ENCODE measurements at regions of chr6 and their contacts with region 1.

Region 1: GRCh38 chr6:16947375-16948015 is 154.4 kb upstream of the STMND1 start:
- DNase-seq: peak; percentile 98
- ATAC-seq: peak; percentile 95
- H3K4me3 ChIP-seq: no peak overlapping the region
- H3K27ac ChIP-seq: peak overlapping the region; percentile 91
- H3K4me1 ChIP-seq: peaks cover 21% of the 10 kb centered on the region
- H3K27me3 ChIP-seq: no peaks in the 10 kb centered on the region
- CTCF ChIP-seq: no peak
- POLR2A ChIP-seq: no peak
- RAD21 ChIP-seq: no peak

Region 2: DNA sequence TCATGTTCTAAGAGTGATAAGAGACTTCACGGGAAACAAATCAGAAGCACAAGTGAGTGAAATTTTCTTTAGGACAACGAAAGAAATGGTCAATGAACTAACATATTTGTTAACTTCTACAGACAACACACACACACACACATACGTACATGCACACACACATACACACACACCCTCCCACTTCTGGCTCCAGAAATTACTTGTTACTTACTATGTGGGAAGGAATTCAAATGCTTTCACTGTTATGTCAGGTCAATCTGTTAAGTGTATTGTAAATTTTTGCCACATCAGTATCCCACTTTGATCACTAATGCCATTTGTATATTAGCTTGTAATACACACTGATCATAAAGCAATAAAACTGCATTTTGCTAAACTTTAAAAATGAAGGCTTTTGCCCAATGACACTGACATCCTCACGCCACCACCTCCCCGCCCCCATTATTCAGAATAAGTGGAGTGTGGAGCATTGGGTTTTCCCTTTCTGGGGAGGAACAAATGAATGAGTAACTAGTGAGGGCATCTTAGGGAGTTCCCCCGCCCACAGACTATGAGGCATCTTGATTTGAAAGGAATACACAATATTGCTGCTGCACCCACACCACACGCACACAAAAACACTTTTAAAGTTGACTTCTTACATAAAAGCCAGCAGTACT is 262.5 kb before region 1 on chr6:
- CTCF ChIA-PET with region 1: no interaction called
- POLR2A ChIA-PET with region 1: no interaction called
- dilution Hi-C with region 1: no loop called
- in situ Hi-C with region 1: no loop called
- intact Hi-C with region 1: no loop called
- DNase-seq: peak; percentile 82
- ATAC-seq: no peak
- H3K4me3 ChIP-seq: no peak overlapping the region
- H3K27ac ChIP-seq: no peak overlapping the region
- H3K4me1 ChIP-seq: peaks cover 23% of the 10 kb centered on the region
- H3K27me3 ChIP-seq: no peaks in the 10 kb centered on the region
- CTCF ChIP-seq: no peak
- POLR2A ChIP-seq: no peak
- RAD21 ChIP-seq: no peak

Region 3: DNA sequence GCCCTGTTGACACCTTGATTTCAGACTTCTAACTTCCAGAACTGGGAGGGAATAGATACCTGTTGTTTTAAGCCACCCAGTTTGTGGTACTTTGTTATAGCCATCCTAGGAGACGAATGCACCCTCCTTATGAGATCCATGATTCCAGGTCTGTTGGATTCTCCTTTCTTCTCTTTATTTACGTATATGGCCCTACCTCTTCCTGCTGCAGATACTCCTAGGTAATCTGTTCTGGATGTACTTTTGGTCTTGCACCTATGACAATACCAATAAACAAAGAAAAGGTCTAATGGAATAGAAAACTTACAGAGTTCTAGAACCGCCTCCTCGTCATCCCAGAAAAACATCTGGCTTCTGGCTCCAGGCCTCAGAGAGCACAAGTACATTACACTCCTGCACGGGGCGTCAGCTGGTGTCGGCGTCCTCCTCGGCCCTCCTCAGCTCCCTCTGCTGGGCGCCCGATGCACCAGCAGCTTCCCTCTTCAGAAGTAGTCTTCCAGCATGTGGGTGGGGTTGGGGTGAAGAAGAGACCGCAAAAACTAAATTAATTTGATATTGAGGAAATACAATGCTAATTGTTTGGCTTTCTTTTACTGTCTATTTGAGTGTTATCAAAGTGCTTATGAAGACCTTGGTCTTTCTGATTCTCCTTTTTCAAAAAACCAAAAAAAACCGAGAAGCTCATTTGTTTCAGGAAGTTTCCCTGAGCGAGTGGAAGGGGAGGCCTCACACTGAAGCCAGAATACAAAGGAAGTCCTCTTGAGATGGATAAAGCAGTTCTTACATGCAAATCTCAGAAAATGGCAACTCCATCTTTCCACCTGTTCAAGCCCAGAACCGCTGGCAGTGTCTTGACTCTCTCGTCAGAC is 176.6 kb before region 1 on chr6:
- CTCF ChIA-PET with region 1: interaction called, 3 read pairs
- POLR2A ChIA-PET with region 1: no interaction called
- dilution Hi-C with region 1: no loop called
- in situ Hi-C with region 1: no loop called
- intact Hi-C with region 1: loop called (anchors 5 kb)
- DNase-seq: peak; percentile 60
- ATAC-seq: no peak
- H3K4me3 ChIP-seq: no peak overlapping the region
- H3K27ac ChIP-seq: peak overlapping the region; percentile 95
- H3K4me1 ChIP-seq: peaks cover 24% of the 10 kb centered on the region
- H3K27me3 ChIP-seq: no peaks in the 10 kb centered on the region
- CTCF ChIP-seq: peak; percentile 66
- POLR2A ChIP-seq: no peak
- RAD21 ChIP-seq: peak; percentile 55